Activated CD4-positive, alpha-beta memory T cell treated with anti-CD3 and anti-CD28 coated beads for 36 hours (primary cell): ENCODE measurements at regions of chr11 and their contacts with region 1.

Region 1: GRCh38 chr11:60363542-60364510 is 14.5 kb upstream of the MS4A7 start:
- DNase-seq: peak; percentile 65
- H3K4me3 Mint-ChIP-seq: no peak overlapping the region
- H3K27ac Mint-ChIP-seq: no peak overlapping the region
- H3K4me1 Mint-ChIP-seq: peaks cover 3% of the 10 kb centered on the region
- H3K27me3 Mint-ChIP-seq: peaks cover 31% of the 10 kb centered on the region

Region 2: DNA sequence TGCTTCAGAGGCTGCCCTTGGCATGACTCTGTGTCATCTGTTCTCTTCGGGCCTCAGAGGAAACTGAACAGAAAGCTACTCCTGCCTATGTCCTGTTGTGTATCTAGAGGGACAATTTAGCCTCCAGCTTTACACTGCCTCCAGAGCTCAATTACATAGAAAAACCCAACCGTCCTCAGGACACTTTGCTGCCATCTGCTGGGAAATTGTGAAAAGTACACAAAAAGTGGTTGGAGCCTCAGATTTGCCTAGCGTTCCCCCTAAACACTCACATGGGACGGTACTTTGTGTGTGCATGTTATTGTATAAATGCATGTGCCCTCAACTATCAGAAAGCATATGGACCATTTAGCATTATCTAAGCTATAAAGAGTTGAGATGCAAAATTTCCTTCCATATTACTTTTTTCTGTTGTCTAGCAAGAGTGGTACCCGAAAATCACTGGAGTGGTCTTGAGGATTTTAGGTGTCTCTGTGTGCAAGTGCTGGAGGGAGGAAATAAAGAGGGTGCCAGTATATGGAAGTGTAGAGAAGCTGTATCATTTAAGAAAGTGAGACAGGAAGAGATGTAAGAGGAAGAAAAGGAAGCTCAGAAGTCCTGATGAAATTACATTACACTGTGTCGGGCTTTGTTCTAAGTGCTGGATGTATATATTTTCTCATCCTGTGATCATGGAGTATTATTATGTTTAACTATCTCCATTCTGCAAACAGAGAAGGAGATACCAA is 112.2 kb before region 1 on chr11:
- CTCF ChIA-PET with region 1: no interaction called
- POLR2A ChIA-PET with region 1: no interaction called
- intact Hi-C with region 1: no loop called
- DNase-seq: no peak
- H3K4me3 Mint-ChIP-seq: no peak overlapping the region
- H3K27ac Mint-ChIP-seq: no peak overlapping the region
- H3K4me1 Mint-ChIP-seq: no peaks in the 10 kb centered on the region
- H3K27me3 Mint-ChIP-seq: peaks cover 19% of the 10 kb centered on the region

Region 3: GRCh38 chr11:60280412-60280811 is 83.4 kb before region 1 on chr11 and contains the start of gene MS4A4A:
- CTCF ChIA-PET with region 1: no interaction called
- POLR2A ChIA-PET with region 1: no interaction called
- intact Hi-C with region 1: no loop called
- DNase-seq: no peak
- H3K4me3 Mint-ChIP-seq: no peak within 1 kb of the TSS
- H3K27ac Mint-ChIP-seq: no peak within 1 kb of the TSS
- H3K4me1 Mint-ChIP-seq: no peaks in the 10 kb centered on the region
- H3K27me3 Mint-ChIP-seq: peaks cover 13% of the 10 kb centered on the region
- total RNA-seq, gene MS4A4A: not detected

Region 4: DNA sequence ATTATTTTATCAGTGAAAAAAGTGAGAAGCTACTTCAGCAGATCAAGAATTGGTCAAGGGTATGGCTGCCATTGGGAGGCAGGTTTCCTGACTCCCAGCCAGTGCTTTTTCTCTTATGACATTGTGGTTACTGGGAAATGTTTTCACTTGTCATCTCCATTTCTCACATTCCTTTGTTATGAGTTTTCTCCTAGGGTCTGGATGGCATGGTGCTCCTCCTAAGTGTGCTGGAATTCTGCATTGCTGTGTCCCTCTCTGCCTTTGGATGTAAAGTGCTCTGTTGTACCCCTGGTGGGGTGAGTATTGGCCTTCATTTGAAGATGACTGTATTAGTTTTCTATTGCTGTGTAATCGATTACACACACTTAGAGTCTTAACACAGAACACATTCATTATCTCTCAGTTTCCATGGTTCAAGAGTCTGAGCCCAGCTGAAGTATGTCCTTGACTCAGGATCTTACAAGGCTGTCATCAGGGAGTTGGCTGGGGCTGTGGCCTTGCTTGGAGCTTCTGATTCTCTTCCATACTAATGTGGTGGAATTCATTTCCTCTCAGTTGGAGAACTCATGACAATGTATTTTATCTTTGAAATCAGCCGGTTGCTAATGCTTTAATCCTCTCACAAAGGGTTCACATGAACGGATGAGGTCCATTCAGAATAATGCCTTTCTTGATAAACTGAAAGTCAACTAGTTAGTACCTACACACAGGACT is 57.8 kb before region 1 on chr11:
- CTCF ChIA-PET with region 1: no interaction called
- POLR2A ChIA-PET with region 1: no interaction called
- intact Hi-C with region 1: loop called (anchors 10 kb)
- DNase-seq: no peak
- H3K4me3 Mint-ChIP-seq: no peak overlapping the region
- H3K27ac Mint-ChIP-seq: no peak overlapping the region
- H3K4me1 Mint-ChIP-seq: peaks cover 2% of the 10 kb centered on the region
- H3K27me3 Mint-ChIP-seq: peaks cover 25% of the 10 kb centered on the region

Region 5: DNA sequence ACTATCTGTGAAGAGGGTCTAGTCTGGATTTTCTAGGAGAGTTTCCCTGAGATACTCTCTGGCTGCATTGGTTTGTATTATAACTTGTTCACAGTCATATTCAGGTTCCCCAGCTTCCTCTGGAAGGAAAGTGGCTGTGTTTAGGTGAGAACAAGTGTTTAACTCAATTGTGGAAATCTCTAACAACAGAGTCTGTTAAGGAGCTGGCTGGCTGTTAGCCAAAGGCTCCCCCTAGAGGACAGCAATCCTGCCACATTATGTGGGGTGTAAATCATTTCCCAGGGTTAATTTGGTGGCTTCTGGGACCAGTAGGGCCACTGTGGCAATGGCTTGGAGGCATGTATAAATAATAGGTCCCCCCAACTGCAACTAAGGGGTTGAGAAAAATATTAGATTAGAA is 18.3 kb before region 1 on chr11:
- CTCF ChIA-PET with region 1: interaction called, 15 read pairs
- POLR2A ChIA-PET with region 1: no interaction called
- intact Hi-C with region 1: no loop called
- DNase-seq: peak; percentile 21
- H3K4me3 Mint-ChIP-seq: no peak overlapping the region
- H3K27ac Mint-ChIP-seq: no peak overlapping the region
- H3K4me1 Mint-ChIP-seq: no peaks in the 10 kb centered on the region
- H3K27me3 Mint-ChIP-seq: peaks cover 26% of the 10 kb centered on the region

Region 6: GRCh38 chr11:60609632-60610031 is 245.8 kb after region 1 on chr11:
- CTCF ChIA-PET with region 1: interaction called, 14 read pairs
- POLR2A ChIA-PET with region 1: no interaction called
- intact Hi-C with region 1: no loop called
- DNase-seq: no peak
- H3K4me3 Mint-ChIP-seq: no peak overlapping the region
- H3K27ac Mint-ChIP-seq: no peak overlapping the region
- H3K4me1 Mint-ChIP-seq: peaks cover 6% of the 10 kb centered on the region
- H3K27me3 Mint-ChIP-seq: peaks cover 21% of the 10 kb centered on the region

Region 7: DNA sequence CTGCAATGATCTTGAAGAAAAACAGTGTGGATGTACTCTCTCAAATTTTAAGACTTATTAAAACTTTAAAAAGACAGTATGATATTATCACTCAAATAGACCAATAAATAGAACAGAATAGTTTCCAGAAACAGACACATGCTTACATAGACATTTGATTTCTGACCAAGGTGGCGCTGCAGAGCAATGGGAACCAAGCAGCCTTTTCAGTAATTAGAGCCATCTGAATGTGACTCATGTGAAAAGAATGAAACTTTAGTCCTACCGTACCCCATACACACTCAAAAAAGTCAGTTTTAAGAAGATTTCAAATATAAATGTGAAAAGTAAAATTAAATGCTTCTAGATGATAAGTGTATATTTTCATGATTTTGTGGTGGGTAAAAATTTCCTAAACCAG is 261.4 kb after region 1 on chr11:
- CTCF ChIA-PET with region 1: interaction called, 102 read pairs
- POLR2A ChIA-PET with region 1: no interaction called
- intact Hi-C with region 1: no loop called
- DNase-seq: peak; percentile 17
- H3K4me3 Mint-ChIP-seq: no peak overlapping the region
- H3K27ac Mint-ChIP-seq: no peak overlapping the region
- H3K4me1 Mint-ChIP-seq: no peaks in the 10 kb centered on the region
- H3K27me3 Mint-ChIP-seq: peaks cover under 1% of the 10 kb centered on the region

Region 8: DNA sequence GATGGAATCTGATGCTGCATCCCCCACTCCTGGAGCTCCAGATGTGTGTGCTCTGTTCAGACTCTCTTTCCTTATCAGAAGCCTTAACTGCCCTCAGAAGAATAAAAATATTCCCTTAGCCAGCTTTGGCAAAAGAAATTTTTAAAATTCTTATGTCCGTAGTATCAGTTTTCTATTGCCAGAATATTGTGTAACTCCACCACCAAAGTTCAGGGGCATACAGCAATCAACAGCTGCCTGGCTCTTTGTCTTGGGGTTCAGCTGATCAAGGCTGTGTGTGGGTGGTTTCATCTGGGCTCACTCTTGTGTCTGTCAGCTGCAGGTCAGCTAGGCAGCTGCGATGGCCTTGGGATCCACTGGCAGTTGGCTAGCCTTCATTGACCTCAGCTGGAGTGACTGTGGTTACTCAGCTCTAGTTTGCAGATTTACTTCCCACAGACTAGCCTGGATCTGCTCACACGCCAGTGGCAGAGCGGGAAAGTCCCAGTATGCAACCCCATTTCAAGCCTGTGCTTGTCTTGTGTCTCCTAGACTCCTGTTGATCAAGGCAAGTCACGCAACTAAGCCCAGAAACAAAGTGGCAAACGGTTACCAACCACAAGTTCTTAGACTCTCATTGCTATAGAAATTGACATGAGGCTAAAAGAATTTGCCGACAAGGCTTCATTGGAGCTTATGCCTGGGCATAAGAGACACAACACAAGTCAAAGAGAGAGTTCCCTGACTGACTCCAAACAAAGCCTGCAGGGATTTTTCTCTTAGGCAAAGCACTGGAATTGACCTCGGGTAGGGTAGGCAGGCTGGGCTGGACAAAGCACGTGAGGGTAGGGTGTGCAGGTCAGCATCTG is 1005.8 kb after region 1 on chr11:
- CTCF ChIA-PET with region 1: no interaction called
- POLR2A ChIA-PET with region 1: no interaction called
- intact Hi-C with region 1: no loop called
- DNase-seq: no peak
- H3K4me3 Mint-ChIP-seq: no peak overlapping the region
- H3K27ac Mint-ChIP-seq: peak overlapping the region; percentile 60
- H3K4me1 Mint-ChIP-seq: peaks cover 8% of the 10 kb centered on the region
- H3K27me3 Mint-ChIP-seq: no peaks in the 10 kb centered on the region